ENCODE measurements at regions of chr14 and their contacts with region 1.

Region 1: GRCh38 chr14:24411443-24412389 is 12.9 kb downstream of the NYNRIN start:
- DNase-seq: no peak
- H3K4me3 ChIP-seq: no peak overlapping the region
- H3K27ac ChIP-seq: no peak overlapping the region
- H3K4me1 ChIP-seq: no peaks in the 10 kb centered on the region
- H3K27me3 ChIP-seq: peaks cover 0 to 4% (median 0%) of the 10 kb centered on the region in 7 donors
- CTCF ChIP-seq: peak; percentile 26 to 80 (median 66)
- POLR2A ChIP-seq: no peak

Region 2: GRCh38 chr14:24366721-24367513 is 44.8 kb before region 1 on chr14:
- intact Hi-C with region 1: loop called (anchors 10 kb)
- DNase-seq: peak; percentile 93
- H3K4me3 ChIP-seq: peak overlapping the region; percentile 18 to 73 (median 36)
- H3K27ac ChIP-seq: peak overlapping the region; percentile 68 to 85 (median 80)
- H3K4me1 ChIP-seq: peaks cover 16 to 60% (median 41%) of the 10 kb centered on the region in 6 donors
- H3K27me3 ChIP-seq: peaks cover 0 to 63% (median 11%) of the 10 kb centered on the region in 7 donors
- CTCF ChIP-seq: no peak
- POLR2A ChIP-seq: no peak

Region 3: GRCh38 chr14:24473211-24473610 is 61.5 kb after region 1 on chr14:
- intact Hi-C with region 1: no loop called
- DNase-seq: no peak
- H3K4me3 ChIP-seq: no peak overlapping the region
- H3K27ac ChIP-seq: no peak overlapping the region
- H3K4me1 ChIP-seq: no peaks in the 10 kb centered on the region
- H3K27me3 ChIP-seq: no peaks in the 10 kb centered on the region
- CTCF ChIP-seq: no peak
- POLR2A ChIP-seq: no peak

Region 4: DNA sequence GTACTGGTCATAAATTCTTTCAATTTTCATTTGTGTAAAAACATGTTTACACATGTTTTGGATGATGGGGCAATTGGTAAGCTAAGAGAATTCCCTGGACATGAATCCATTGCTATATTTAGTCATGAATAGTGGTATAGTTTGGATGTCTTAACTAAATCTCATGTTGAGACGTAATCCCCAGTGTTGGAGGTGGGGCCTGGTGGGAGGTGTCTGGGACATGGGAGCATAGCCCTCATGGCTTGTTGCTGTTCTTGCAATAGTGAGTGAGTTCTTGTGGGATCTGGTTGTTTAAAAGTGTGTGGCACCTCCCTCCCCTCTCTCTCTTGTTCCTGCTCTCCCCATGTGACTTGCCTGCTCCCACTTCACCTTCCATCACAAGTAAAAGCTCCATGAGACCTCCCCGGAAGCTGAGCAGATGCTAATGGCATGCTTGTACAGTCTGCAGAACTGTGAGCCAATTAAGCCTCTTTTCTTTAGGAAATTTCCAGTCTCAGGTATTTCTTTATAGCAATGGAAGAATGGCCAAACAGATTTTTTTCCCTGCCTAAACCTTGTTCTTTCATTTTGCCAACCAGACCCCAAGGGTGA is 130.7 kb after region 1 on chr14:
- intact Hi-C with region 1: no loop called
- DNase-seq: no peak
- H3K4me3 ChIP-seq: no peak overlapping the region
- H3K27ac ChIP-seq: no peak overlapping the region
- H3K4me1 ChIP-seq: no peaks in the 10 kb centered on the region
- H3K27me3 ChIP-seq: no peaks in the 10 kb centered on the region
- CTCF ChIP-seq: no peak
- POLR2A ChIP-seq: no peak

Measured in spleen (tissue), 13 donors.